ENCODE measurements at regions of chr4 and their contacts with region 1.

Region 1: GRCh38 chr4:181138116-181138515 is 1105.1 kb upstream of the TENM3 start:
- DNase-seq: no peak
- ATAC-seq: no peak
- H3K4me3 ChIP-seq: no peak overlapping the region
- H3K4me3 Mint-ChIP-seq: no peak overlapping the region
- H3K27ac ChIP-seq: no peak overlapping the region
- H3K27ac Mint-ChIP-seq: no peak overlapping the region
- H3K4me1 ChIP-seq: no peaks in the 10 kb centered on the region
- H3K4me1 Mint-ChIP-seq: no peaks in the 10 kb centered on the region
- H3K27me3 ChIP-seq: no peaks in the 10 kb centered on the region
- H3K27me3 Mint-ChIP-seq: peaks cover 0 to 2% of the 10 kb centered on the region in 2 donors

Region 2: DNA sequence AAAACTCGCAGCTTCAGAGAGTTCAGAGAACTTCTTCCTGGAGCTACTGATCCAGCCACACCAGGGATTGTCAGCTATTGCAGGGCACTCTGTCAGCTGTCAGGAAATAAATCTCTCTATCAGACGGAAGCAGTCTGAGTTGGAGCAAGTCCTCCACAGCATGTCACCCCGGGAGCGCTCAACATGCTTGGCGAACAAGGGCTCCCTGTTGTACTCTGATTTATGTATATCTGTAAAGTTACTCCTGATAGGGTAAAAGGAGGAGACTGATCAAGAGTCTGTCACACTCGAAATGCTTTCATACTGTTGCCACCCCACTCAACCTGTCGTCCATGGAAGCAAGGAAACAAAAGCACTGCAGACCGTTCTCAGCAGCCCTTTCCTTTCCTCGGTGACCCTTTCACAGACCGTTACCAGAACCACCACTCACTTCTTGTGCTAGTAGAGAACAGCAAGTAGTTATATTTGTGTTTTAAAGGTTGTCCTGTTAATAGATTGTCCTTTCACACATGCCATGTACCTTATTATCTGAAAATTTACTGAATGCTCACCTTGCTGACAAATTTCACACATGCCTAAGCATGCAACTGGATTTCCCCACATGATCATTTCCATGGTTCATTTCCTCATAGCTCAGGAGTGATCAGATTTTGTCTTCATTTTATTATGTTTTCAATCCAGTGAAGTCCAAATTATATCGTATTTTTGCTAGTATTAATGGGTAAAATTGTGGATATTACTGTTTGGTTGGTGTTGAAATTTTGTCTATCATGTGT is 1003.8 kb before region 1 on chr4:
- CTCF ChIA-PET with region 1: no interaction called
- POLR2A ChIA-PET with region 1: no interaction called
- DNase-seq: no peak
- ATAC-seq: peak in 1 of 4 experiments; percentile 20
- H3K4me3 ChIP-seq: no peak overlapping the region
- H3K4me3 Mint-ChIP-seq: peak overlapping the region in 1 of 3 donors; percentile 9
- H3K27ac ChIP-seq: no peak overlapping the region
- H3K27ac Mint-ChIP-seq: no peak overlapping the region
- H3K4me1 ChIP-seq: no peaks in the 10 kb centered on the region
- H3K4me1 Mint-ChIP-seq: peaks cover 0 to 4% (median 0%) of the 10 kb centered on the region in 3 donors
- H3K27me3 ChIP-seq: no peaks in the 10 kb centered on the region
- H3K27me3 Mint-ChIP-seq: no peaks in the 10 kb centered on the region

Region 3: DNA sequence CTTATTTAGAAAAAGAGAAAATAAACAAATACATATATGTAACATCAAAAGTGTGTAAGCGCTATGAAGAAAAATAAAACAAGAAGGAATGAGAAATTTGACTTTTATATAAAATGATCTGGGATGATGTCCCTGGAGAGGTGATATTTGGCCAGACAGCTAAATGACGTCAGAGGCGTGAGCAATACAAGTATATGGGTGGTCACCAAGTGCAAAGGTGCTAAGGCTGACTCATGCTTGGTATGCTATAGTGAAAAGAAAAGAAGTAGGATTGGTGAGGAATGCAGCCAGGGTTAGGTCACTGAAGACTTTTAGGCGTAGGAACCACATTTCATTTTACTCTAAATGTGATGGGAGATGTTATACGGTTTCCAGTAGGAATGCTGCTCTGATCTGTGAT is 56.0 kb after region 1 on chr4:
- CTCF ChIA-PET with region 1: interaction called in 1 of 2 experiments, 10 read pairs
- POLR2A ChIA-PET with region 1: no interaction called
- DNase-seq: no peak
- ATAC-seq: no peak
- H3K4me3 ChIP-seq: no peak overlapping the region
- H3K4me3 Mint-ChIP-seq: no peak overlapping the region
- H3K27ac ChIP-seq: no peak overlapping the region
- H3K27ac Mint-ChIP-seq: no peak overlapping the region
- H3K4me1 ChIP-seq: no peaks in the 10 kb centered on the region
- H3K4me1 Mint-ChIP-seq: no peaks in the 10 kb centered on the region
- H3K27me3 ChIP-seq: no peaks in the 10 kb centered on the region
- H3K27me3 Mint-ChIP-seq: no peaks in the 10 kb centered on the region

Region 4: GRCh38 chr4:181952478-181952877 is 814.4 kb after region 1 on chr4:
- CTCF ChIA-PET with region 1: no interaction called
- POLR2A ChIA-PET with region 1: no interaction called
- DNase-seq: no peak
- ATAC-seq: no peak
- H3K4me3 ChIP-seq: no peak overlapping the region
- H3K4me3 Mint-ChIP-seq: no peak overlapping the region
- H3K27ac ChIP-seq: no peak overlapping the region
- H3K27ac Mint-ChIP-seq: no peak overlapping the region
- H3K4me1 ChIP-seq: no peaks in the 10 kb centered on the region
- H3K4me1 Mint-ChIP-seq: no peaks in the 10 kb centered on the region
- H3K27me3 ChIP-seq: no peaks in the 10 kb centered on the region
- H3K27me3 Mint-ChIP-seq: no peaks in the 10 kb centered on the region

Measured in T-cell (primary cell).